Ascending aorta (tissue), 2 donors: ENCODE measurements at regions of chr3 and their contacts with region 1.

Region 1: GRCh38 chr3:40780291-40780924 is 255.6 kb downstream of the ZNF621 start:
- DNase-seq: peak in 1 of 2 donors; percentile 88
- H3K4me3 ChIP-seq: peak overlapping the region; percentile 16 to 57
- H3K27ac ChIP-seq: peak overlapping the region; percentile 83 to 84
- H3K4me1 ChIP-seq: peaks cover 11 to 17% of the 10 kb centered on the region in 2 donors
- H3K27me3 ChIP-seq: no peaks in the 10 kb centered on the region
- CTCF ChIP-seq: no peak

Region 2: GRCh38 chr3:40690749-40691451 is 89.5 kb before region 1 on chr3:
- intact Hi-C with region 1: loop called (anchors 5 kb)
- DNase-seq: peak; percentile 37 to 88
- H3K4me3 ChIP-seq: no peak overlapping the region
- H3K27ac ChIP-seq: peak overlapping the region; percentile 70 to 71
- H3K4me1 ChIP-seq: peaks cover 14 to 25% of the 10 kb centered on the region in 2 donors
- H3K27me3 ChIP-seq: no peaks in the 10 kb centered on the region
- CTCF ChIP-seq: no peak

Region 3: GRCh38 chr3:40827104-40827625 is 46.8 kb after region 1 on chr3:
- intact Hi-C with region 1: no loop called
- DNase-seq: no peak
- H3K4me3 ChIP-seq: no peak overlapping the region
- H3K27ac ChIP-seq: no peak overlapping the region
- H3K4me1 ChIP-seq: no peaks in the 10 kb centered on the region
- H3K27me3 ChIP-seq: no peaks in the 10 kb centered on the region
- CTCF ChIP-seq: no peak

Region 4: DNA sequence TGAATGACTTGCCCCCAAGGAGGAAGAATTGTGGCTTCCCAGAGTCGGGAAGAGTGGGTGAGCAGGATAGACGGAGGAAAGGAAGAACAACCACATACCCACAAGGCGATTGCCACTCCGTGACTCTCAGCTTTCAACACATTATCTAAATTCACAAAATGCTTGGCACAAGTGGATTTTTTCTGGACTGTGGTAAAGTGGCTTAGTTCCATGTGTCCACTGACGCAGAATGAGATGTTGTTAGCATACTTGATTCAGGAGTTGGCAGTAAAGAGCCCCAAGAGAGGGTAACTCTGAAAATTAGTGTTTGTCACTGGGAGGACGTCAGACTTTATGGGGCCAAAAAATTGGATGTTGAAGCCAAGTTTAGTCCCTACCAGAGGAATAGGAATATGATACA is 220.1 kb after region 1 on chr3:
- intact Hi-C with region 1: loop called (anchors 2 kb)
- DNase-seq: peak in 1 of 2 donors; percentile 83
- H3K4me3 ChIP-seq: no peak overlapping the region
- H3K27ac ChIP-seq: peak overlapping the region; percentile 58 to 62
- H3K4me1 ChIP-seq: peaks cover 0 to 22% of the 10 kb centered on the region in 2 donors
- H3K27me3 ChIP-seq: no peaks in the 10 kb centered on the region
- CTCF ChIP-seq: no peak

Region 5: DNA sequence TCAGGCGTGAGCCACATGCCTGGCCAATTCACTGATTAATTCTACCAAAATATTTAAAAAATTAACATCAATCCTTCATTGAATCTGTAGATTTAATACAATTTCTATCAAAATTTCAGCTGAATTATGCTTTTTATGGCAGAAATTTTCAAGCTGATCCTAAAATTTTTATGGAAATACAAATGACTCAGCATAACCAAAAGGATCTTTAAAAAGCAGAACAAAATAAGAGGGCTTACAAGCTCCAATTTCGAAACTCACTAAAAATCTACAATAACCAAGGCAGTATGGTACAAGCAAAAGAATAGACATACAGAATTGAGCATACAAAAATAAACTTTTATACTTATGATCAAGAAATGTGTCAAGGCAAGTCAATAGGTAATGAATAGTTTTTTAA is 238.4 kb after region 1 on chr3:
- intact Hi-C with region 1: no loop called
- DNase-seq: no peak
- H3K4me3 ChIP-seq: no peak overlapping the region
- H3K27ac ChIP-seq: no peak overlapping the region
- H3K4me1 ChIP-seq: no peaks in the 10 kb centered on the region
- H3K27me3 ChIP-seq: no peaks in the 10 kb centered on the region
- CTCF ChIP-seq: no peak